Caco-2 (cell line): ENCODE measurements at regions of chr11 and their contacts with region 1.

Region 1: DNA sequence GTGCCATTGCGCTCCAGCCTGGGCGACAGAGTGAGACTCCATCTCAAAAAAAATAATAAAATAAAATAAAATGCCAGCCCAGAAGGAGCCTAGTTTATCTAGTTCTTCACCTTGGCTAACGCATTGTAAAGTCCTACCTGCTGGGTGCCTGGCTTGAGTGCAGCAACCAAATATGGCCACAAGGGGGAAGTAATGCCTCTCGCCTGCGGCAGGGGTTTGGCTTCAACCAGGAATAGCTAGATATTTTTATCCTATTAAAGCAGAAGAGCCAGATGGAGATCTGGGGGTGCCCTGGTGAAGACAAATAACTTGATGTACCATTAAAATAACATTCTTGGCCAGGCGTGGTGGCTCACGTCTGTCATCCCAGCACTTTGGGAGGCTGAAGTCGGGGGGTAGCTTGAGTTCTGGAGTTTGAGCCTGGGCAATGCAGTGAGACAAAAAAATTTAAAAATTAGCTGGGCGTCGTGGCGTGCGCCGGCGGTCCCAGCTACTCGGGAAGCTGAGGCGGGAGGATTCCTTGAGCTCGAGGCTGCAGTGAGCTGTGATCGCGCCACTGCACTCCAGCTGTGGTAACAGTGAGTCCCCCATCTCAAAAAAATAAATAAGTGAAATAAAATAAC is 20.6 kb upstream of the PLEKHB1 start:
- DNase-seq: peak; percentile 86 to 92
- H3K4me3 ChIP-seq: no peak overlapping the region
- H3K4me3 Mint-ChIP-seq: peak overlapping the region; percentile 66
- H3K27ac Mint-ChIP-seq: peak overlapping the region; percentile 53
- H3K4me1 ChIP-seq: peaks cover 21% of the 10 kb centered on the region
- H3K4me1 Mint-ChIP-seq: peaks cover 24% of the 10 kb centered on the region
- H3K27me3 ChIP-seq: no peaks in the 10 kb centered on the region
- H3K27me3 Mint-ChIP-seq: peaks cover 5% of the 10 kb centered on the region
- CTCF ChIP-seq: peak; percentile 98 to 99

Region 2: DNA sequence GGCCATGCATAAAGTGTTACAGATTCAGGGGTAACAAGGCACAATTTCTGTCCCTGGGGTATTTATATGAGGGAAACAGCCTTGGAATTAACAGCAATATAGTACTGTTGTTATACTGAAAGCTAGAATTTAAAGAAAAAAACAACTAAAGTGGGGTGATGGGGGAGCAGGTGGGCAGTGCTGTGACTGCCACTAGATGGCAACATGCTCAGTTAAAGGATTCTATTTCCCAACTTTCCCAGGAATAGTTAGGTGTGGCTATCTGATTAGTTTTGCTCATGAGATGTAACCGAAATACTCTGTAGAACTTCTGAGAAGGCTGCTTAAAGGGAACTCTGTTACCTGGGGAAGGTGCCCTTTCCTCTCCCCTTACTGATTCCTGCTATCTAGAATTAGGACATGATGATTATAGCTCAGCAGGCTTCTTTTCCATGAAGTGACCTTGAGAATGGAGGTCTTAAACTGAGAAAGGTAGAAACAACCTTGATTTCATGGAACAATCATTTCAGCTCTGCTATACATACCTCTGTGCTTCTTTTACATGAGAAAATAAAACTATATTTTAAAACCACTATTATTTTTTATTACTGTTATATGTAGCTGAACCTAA is 147.0 kb before region 1 on chr11:
- CTCF ChIA-PET with region 1: interaction called, 32 read pairs
- POLR2A ChIA-PET with region 1: no interaction called
- intact Hi-C with region 1: no loop called
- DNase-seq: peak in 1 of 2 experiments; percentile 63
- H3K4me3 ChIP-seq: no peak overlapping the region
- H3K4me3 Mint-ChIP-seq: no peak overlapping the region
- H3K27ac Mint-ChIP-seq: no peak overlapping the region
- H3K4me1 ChIP-seq: peaks cover 5% of the 10 kb centered on the region; the same call in 1 of the 2 replicates
- H3K4me1 Mint-ChIP-seq: peaks cover 6% of the 10 kb centered on the region
- H3K27me3 ChIP-seq: no peaks in the 10 kb centered on the region
- H3K27me3 Mint-ChIP-seq: no peaks in the 10 kb centered on the region
- CTCF ChIP-seq: peak; percentile 95 to 98

Region 3: GRCh38 chr11:73647459-73648100 is 21.8 kb after region 1 on chr11:
- CTCF ChIA-PET with region 1: interaction called, 19 read pairs
- POLR2A ChIA-PET with region 1: no interaction called
- intact Hi-C with region 1: loop called (anchors 1 kb)
- DNase-seq: peak; percentile 94 to 95
- H3K4me3 ChIP-seq: peak overlapping the region; percentile 40
- H3K4me3 Mint-ChIP-seq: peak overlapping the region; percentile 78
- H3K27ac Mint-ChIP-seq: peak overlapping the region; percentile 36
- H3K4me1 ChIP-seq: peaks cover 10% of the 10 kb centered on the region; the same call in 1 of the 2 replicates
- H3K4me1 Mint-ChIP-seq: peaks cover 25% of the 10 kb centered on the region
- H3K27me3 ChIP-seq: no peaks in the 10 kb centered on the region
- H3K27me3 Mint-ChIP-seq: no peaks in the 10 kb centered on the region
- CTCF ChIP-seq: no peak

Region 4: DNA sequence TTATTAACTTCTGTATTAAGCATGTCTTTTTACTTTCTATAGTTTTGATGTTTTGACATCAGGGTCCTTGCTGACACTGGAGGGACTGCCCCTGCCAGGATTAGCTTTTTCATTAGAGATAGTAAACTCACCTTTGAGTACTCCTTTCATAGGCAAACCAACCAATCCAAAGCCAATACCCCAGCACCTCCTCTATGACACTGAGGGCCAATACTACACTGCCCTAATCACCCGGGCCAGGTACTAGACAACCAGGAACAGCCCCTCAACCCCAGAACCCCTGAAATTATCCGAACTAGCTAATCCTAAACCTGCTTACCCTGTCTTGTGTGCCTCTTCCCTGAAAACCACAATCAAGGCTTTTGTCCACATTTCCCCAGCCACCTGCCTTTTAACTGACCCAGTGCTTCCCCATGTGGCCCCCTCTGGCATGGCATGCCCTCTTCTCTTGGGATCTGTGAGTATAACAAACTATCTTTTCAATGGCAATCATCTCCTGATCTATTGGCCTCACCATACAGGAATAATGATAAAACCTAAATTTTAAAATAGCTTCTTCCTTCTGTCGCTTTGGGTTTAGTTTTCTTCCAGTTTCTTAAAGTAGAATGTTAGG is 103.9 kb after region 1 on chr11:
- CTCF ChIA-PET with region 1: interaction called, 3 read pairs
- POLR2A ChIA-PET with region 1: no interaction called
- intact Hi-C with region 1: loop called (anchors 5 kb)
- DNase-seq: peak; percentile 65 to 74
- H3K4me3 ChIP-seq: no peak overlapping the region
- H3K4me3 Mint-ChIP-seq: no peak overlapping the region
- H3K27ac Mint-ChIP-seq: peak overlapping the region; percentile 24
- H3K4me1 ChIP-seq: no peaks in the 10 kb centered on the region
- H3K4me1 Mint-ChIP-seq: peaks cover 5% of the 10 kb centered on the region
- H3K27me3 ChIP-seq: no peaks in the 10 kb centered on the region
- H3K27me3 Mint-ChIP-seq: no peaks in the 10 kb centered on the region
- CTCF ChIP-seq: peak; percentile 85 to 90

Region 5: GRCh38 chr11:73876424-73877300 is 250.9 kb after region 1 on chr11 and contains the starts of genes COA4 and PAAF1:
- CTCF ChIA-PET with region 1: no interaction called
- POLR2A ChIA-PET with region 1: no interaction called
- intact Hi-C with region 1: loop called (anchors 1 kb)
- DNase-seq: peak; percentile 100
- H3K4me3 ChIP-seq: peak within 1 kb of the TSS; percentile 62
- H3K4me3 Mint-ChIP-seq: peak within 1 kb of the TSS; percentile 91
- H3K27ac Mint-ChIP-seq: peak within 1 kb of the TSS; percentile 95
- H3K4me1 ChIP-seq: peaks cover 23% of the 10 kb centered on the region
- H3K4me1 Mint-ChIP-seq: peaks cover 6% of the 10 kb centered on the region
- H3K27me3 ChIP-seq: no peaks in the 10 kb centered on the region
- H3K27me3 Mint-ChIP-seq: no peaks in the 10 kb centered on the region
- CTCF ChIP-seq: no peak
- total RNA-seq, gene COA4: 127 and 137 TPM in 2 replicates
- total RNA-seq, gene PAAF1: 51.6 and 53.4 TPM in 2 replicates

Region 6: GRCh38 chr11:74226907-74227306 is 601.1 kb after region 1 on chr11:
- CTCF ChIA-PET with region 1: no interaction called
- POLR2A ChIA-PET with region 1: no interaction called
- intact Hi-C with region 1: no loop called
- DNase-seq: peak in 1 of 2 experiments; percentile 48
- H3K4me3 ChIP-seq: no peak overlapping the region
- H3K4me3 Mint-ChIP-seq: no peak overlapping the region
- H3K27ac Mint-ChIP-seq: no peak overlapping the region
- H3K4me1 ChIP-seq: no peaks in the 10 kb centered on the region
- H3K4me1 Mint-ChIP-seq: peaks cover 9% of the 10 kb centered on the region
- H3K27me3 ChIP-seq: no peaks in the 10 kb centered on the region
- H3K27me3 Mint-ChIP-seq: no peaks in the 10 kb centered on the region
- CTCF ChIP-seq: peak in 1 of 2 experiments; percentile 27